Activated CD4-positive, alpha-beta memory T cell treated with anti-CD3 and anti-CD28 coated beads, Interleukin-2, amount 10 ng/mL, durations not matched to agents 7 days and 5 days (primary cell): ENCODE measurements at regions of chr14 and their contacts with region 1.

Region 1: DNA sequence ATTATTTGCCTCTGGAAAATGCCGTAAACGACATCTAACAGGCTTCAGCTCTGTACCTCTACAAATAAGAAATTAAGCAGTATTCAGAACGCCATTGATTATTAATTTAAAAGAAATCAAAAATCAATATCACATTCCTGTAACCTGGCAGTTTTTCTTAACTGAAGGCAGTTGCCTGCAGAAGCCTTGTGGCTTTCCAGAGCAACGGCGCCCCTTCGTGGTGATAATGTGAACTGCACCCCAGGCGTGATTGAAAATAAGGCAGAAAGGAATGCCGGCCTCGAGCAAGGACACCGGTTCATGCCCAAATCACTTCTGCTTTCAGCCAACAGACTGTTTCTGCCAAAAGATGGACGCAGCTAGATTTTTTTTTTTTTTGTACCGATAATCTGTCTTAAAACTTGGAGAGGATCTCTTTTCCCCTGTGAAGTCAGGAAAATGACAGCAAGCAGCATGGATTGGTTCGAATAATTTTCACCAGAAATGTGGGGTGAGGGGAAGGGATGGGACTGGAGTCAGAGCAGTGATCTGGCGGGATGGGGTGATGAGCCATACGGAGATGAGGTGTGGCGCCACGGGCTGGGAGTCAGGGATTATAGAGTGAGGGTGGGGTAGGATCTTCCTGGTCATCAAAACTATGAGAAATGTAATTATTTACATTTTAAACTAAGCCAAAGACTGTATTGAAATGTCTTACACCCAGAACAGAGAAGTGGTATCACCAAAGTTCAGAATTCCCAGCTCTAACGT is 473.0 kb downstream of the DPF3 start:
- DNase-seq: peak; percentile 84
- H3K4me3 Mint-ChIP-seq: no peak overlapping the region
- H3K27ac Mint-ChIP-seq: no peak overlapping the region
- H3K4me1 Mint-ChIP-seq: peaks cover 13% of the 10 kb centered on the region
- H3K27me3 Mint-ChIP-seq: peaks cover 23% of the 10 kb centered on the region

Region 2: DNA sequence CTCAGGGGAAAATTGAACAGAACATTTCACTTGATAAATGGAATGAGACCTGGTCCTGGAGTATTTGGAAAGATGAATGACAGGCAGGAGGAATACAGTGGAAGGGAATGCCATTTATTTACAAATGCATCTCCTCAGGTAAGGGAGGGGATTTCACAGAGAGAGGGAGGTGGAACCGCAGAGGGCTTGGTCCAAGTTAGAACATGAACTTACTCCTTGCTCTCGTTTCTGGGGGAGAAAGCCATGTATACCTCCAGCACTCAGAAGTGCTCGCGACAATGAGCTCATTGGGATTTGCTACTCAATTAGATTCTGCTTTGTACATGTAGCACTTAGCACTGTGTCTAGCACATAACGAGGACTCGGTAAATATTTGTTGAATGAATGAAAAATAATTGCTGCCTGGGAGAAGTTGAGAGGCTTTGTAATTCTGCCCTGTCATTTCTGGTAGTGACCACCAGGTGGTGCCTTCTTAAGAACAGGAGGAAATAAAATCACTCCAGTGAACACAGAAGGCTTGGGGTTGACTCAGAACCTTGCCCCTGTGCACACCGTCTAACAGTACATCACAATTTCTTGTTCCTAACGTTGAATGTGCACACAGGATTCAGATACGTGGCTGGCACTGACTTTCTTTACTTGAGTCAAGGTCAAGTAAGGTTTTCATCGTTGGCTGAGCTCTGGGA is 397.0 kb before region 1 on chr14:
- CTCF ChIA-PET with region 1: interaction called, 23 read pairs
- POLR2A ChIA-PET with region 1: no interaction called
- DNase-seq: peak; percentile 58
- H3K4me3 Mint-ChIP-seq: no peak overlapping the region
- H3K27ac Mint-ChIP-seq: no peak overlapping the region
- H3K4me1 Mint-ChIP-seq: peaks cover 19% of the 10 kb centered on the region
- H3K27me3 Mint-ChIP-seq: peaks cover 54% of the 10 kb centered on the region

Region 3: DNA sequence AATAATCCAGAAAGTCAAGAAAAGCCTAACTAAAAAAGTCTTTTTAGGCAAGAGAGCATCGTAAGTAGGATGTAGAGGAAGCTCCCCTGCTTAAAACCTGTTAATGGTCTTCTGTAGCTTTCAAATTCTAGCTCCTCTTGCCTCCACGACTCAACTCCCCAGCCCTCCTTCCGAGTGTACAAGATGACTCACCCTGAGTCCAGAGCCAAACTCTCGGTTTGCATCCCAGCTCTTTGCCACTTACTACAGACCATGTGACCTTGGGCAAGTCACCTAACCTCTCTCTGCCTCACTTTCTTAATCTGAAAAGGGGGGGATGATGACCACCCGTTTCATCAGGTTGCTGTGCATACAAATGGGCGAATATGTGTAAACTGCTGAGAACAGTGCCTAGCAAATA is 12.6 kb after region 1 on chr14:
- CTCF ChIA-PET with region 1: interaction called, 14 read pairs
- POLR2A ChIA-PET with region 1: interaction called, 13 read pairs
- DNase-seq: no peak
- H3K4me3 Mint-ChIP-seq: no peak overlapping the region
- H3K27ac Mint-ChIP-seq: no peak overlapping the region
- H3K4me1 Mint-ChIP-seq: peaks cover 53% of the 10 kb centered on the region
- H3K27me3 Mint-ChIP-seq: peaks cover 5% of the 10 kb centered on the region

Region 4: DNA sequence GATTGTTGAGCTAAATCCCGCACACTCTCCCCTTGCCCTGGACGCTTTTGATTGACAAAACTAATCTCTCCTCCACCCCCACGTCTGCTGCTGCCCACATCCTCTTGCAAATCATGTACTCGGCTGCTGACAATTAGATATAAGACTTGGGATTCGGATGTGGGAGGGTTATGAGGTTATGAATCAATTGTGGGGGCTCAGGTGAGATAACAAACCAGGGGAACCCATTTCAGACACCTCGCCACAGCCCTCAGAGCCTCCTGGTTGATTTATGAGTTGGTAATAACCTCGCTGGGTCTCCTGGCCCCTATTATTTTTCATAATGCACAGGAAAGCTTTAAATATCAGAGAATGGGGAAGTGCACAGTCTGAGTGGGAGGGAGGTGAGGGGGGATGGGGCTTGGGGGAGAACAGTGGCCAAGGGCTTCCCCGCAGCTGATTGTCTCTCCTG is 23.1 kb after region 1 on chr14:
- CTCF ChIA-PET with region 1: interaction called, 14 read pairs
- POLR2A ChIA-PET with region 1: interaction called, 13 read pairs
- DNase-seq: peak; percentile 76
- H3K4me3 Mint-ChIP-seq: peak overlapping the region; percentile 12
- H3K27ac Mint-ChIP-seq: peak overlapping the region; percentile 84
- H3K4me1 Mint-ChIP-seq: peaks cover 89% of the 10 kb centered on the region
- H3K27me3 Mint-ChIP-seq: no peaks in the 10 kb centered on the region